SK-N-SH (cell line): ENCODE measurements at regions of chr6 and their contacts with region 1.

Region 1: GRCh38 chr6:36780442-36781177 is 58.6 kb downstream of the CPNE5 start:
- DNase-seq: no peak
- H3K4me3 ChIP-seq: no peak overlapping the region
- H3K27ac ChIP-seq: no peak overlapping the region
- H3K4me1 ChIP-seq: peaks cover 0 to 7% of the 10 kb centered on the region in 2 experiments; a peak in 1 of 4 replicates
- H3K27me3 ChIP-seq: 0 out of 2 replicates have a peak, but pooled peaks cover 7% of the 10 kb centered on the region
- CTCF ChIP-seq: no peak
- EP300 ChIP-seq: no peak
- RAD21 ChIP-seq: no peak

Region 2: GRCh38 chr6:36743538-36744303 is 36.9 kb before region 1 on chr6:
- CTCF ChIA-PET with region 1: no interaction called
- POLR2A ChIA-PET with region 1: no interaction called
- DNase-seq: no peak
- H3K4me3 ChIP-seq: no peak overlapping the region
- H3K27ac ChIP-seq: no peak overlapping the region
- H3K4me1 ChIP-seq: no peaks in the 10 kb centered on the region
- H3K27me3 ChIP-seq: no peaks in the 10 kb centered on the region
- CTCF ChIP-seq: no peak
- EP300 ChIP-seq: no peak
- RAD21 ChIP-seq: no peak

Region 3: GRCh38 chr6:36793913-36794712 is 13.5 kb after region 1 on chr6:
- CTCF ChIA-PET with region 1: interaction called, 11 read pairs
- POLR2A ChIA-PET with region 1: no interaction called
- DNase-seq: peak; percentile 72
- H3K4me3 ChIP-seq: no peak overlapping the region
- H3K27ac ChIP-seq: no peak overlapping the region; a peak in 1 of 4 replicates
- H3K4me1 ChIP-seq: peaks cover 0 to 18% of the 10 kb centered on the region in 2 experiments; a peak in 2 of 4 replicates
- H3K27me3 ChIP-seq: no peaks in the 10 kb centered on the region
- CTCF ChIP-seq: no peak
- EP300 ChIP-seq: no peak
- RAD21 ChIP-seq: no peak

Region 4: DNA sequence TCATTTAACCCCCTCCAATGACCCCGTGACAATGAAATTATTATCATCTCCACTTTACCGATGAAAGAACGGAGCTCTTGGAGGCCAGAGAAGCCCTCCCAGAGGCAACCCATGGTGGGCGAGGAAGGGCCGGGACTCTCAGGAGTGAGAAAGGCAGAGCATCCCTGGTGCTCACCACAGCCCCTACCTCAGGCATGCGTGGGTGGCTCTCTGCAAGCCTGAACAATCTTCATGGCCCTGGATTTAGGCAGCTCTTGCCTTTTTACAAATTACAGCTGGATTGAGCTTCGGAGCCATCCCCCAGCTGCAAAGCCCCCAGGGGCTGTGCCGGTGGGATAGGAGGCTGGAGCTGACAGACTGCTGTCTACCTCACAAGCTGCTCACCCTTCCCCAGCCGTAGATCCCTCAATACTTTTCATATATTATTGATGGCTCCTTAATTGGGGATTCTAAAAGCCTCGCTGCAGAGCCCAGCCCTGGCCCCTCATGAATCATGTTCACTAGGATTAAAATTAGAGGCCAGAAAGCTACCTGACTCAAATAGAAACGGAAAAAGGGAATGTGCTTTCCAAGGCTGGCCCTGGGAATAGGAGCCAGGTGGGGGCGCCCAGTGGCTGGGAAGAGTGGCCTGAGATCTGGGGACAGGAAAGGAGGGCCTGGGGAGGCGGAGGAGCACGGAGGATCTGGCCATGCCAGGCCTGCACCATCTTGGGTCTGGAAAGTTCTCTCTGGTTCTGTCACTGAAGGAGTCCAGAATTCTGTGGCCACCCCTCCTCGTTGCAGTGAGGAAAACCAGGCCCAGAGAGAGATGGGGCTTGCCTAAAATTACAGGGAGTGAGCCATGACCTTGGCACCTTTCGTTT is 29.6 kb after region 1 on chr6:
- CTCF ChIA-PET with region 1: interaction called, 11 read pairs
- POLR2A ChIA-PET with region 1: no interaction called
- DNase-seq: no peak
- H3K4me3 ChIP-seq: no peak overlapping the region
- H3K27ac ChIP-seq: no peak overlapping the region
- H3K4me1 ChIP-seq: no peaks in the 10 kb centered on the region
- H3K27me3 ChIP-seq: no peaks in the 10 kb centered on the region; the same call in 1 of the 2 replicates
- CTCF ChIP-seq: no peak
- EP300 ChIP-seq: no peak
- RAD21 ChIP-seq: peak; percentile 45

Region 5: DNA sequence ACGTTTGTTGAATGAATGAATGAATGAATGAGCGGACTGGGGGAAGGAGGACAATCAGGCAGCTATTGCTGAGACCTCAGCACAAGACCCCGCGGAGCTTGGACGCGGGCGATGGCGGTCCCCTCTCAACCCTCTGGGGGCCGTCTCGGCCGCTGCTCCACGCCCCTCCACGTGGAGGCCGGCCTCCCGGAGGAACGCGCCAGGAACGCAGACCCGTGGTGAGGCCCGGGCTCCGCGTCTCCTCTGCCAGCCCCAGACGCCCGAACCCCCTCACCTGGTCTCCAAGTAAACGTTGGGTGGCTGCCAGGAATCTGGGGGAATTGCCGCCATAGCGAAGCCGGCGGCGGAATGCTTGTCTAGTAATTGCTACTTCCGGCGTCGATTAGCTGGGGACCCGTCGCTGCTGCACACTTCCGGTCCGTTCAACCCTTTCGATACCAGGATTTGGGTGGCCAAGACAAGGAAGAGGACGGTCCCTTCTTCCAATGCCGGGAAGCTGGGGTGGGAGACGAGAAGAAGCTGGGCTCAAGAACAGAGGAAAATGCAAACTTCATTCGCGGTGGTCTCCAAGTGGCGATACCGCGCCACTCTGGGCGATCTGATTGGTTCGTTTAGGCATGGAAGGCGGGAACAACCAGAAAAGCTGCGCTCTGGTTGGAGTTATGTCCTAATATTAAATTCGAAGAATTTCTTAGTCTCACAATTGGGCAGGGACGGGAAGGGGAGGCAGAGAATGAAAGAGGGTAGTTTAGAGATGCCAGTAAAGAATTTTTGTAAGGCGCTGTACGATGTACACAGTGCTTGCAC is 94.0 kb after region 1 on chr6 and contains the start of gene PPIL1:
- CTCF ChIA-PET with region 1: interaction called, 11 read pairs
- POLR2A ChIA-PET with region 1: interaction called, 3 read pairs
- DNase-seq: peak; percentile 94
- H3K4me3 ChIP-seq: peak within 1 kb of the TSS; percentile 76 to 87
- H3K27ac ChIP-seq: peak within 1 kb of the TSS; percentile 95 to 100
- H3K4me1 ChIP-seq: peaks cover 0 to 10% of the 10 kb centered on the region in 2 experiments; a peak in 2 of 4 replicates
- H3K27me3 ChIP-seq: no peaks in the 10 kb centered on the region
- CTCF ChIP-seq: no peak
- EP300 ChIP-seq: peak in 1 of 2 experiments; percentile 6; a peak in 2 of 4 replicates
- RAD21 ChIP-seq: no peak
- polyA plus RNA-seq, gene PPIL1: 36.6 and 48.4 TPM in 2 replicates